Calu3 (cell line): ENCODE measurements at regions of chr21 and their contacts with region 1.

Region 1: DNA sequence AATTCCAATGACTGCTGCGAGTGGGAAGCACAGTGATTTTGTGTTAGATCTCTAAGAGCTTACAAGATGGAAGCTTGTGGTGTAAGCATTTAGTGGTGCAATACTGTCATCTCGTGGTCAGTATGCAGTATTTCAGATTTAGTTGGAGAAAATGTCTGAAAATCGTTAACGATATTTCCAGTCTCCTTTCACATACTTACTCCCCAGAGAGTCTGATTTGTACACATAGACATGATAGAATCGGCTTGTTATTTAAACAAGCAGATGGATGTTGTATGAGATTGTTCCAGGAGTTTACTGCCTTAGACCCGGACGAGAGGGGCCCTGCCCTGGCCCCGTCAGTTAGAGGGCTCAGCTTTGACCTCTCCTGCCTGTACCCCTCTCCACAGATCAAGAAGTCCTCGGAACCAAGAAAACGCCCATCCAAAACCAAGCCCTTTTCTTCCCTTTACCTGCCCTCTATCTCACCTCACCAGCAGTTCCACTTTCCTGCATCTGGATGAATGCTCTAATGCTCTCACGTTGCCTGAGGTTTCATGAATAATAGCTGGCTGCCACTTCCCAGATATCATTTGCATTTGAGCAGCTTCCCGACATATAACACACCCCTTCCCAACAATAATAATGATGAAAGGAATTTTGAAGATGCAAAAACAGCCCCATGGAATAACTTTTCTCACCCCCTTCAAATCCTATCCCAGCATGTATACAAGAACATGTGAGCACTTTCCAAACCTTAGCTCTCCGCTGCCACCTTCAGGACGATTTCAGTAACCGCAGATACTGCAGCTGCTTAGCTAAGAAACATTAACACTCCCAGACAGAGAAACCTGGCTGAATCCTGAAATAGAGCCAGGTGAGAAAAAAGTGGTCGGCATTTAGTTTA is 247.3 kb downstream of the LTN1 start:
- DNase-seq: peak; percentile 68
- H3K4me3 Mint-ChIP-seq: no peak overlapping the region
- H3K27ac Mint-ChIP-seq: no peak overlapping the region
- H3K4me1 Mint-ChIP-seq: no peaks in the 10 kb centered on the region
- H3K27me3 Mint-ChIP-seq: no peaks in the 10 kb centered on the region
- CTCF ChIP-seq: peak; percentile 54

Region 2: GRCh38 chr21:27700974-27701614 is 1044.3 kb before region 1 on chr21:
- CTCF ChIA-PET with region 1: interaction called, 10 read pairs
- intact Hi-C with region 1: loop called (anchors 2 kb)
- DNase-seq: peak; percentile 77
- H3K4me3 Mint-ChIP-seq: no peak overlapping the region
- H3K27ac Mint-ChIP-seq: no peak overlapping the region
- H3K4me1 Mint-ChIP-seq: peaks cover 6% of the 10 kb centered on the region
- H3K27me3 Mint-ChIP-seq: no peaks in the 10 kb centered on the region
- CTCF ChIP-seq: peak; percentile 83

Region 3: DNA sequence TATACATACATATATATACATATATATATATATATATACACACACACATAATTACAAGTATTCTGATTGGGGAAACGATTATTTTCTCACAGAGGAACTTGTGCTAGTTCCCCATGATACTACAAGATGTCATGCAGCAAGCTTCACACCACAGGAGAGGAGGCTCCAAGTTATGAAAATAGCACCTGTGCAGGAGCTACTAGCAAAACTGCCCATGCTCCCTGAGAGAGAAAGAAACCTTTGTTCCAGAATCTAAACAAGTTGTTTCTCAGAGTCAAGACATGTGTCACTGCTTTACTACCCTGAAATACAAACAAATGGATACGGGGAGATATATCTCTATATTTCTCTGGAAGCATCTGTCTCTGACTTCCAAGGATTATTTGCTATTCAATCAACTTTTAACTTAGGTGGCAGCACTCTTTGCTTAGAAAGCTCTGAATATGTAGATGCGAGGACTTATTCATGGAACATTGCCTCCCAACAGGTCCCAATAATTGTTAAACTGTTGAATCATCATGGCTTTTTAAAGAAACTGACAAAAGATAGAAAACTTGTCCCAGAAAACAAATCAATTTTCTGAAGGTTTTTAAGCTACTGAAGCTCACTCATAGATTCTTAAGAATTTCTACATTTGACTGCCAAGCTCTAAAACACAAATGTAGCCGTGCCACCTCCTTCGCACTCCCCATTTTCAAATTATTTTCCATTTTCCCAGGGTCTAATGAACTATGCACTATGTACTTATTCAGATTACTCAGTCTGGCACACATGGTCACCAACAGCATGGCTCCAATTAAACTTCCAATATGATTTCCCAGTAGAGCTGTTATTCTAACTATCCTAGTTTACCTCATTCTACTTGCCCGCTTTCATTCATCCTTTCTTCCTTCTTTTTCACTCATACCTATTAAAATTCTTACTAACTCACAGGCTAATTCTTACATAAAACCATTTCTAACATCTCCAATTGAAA is 681.8 kb before region 1 on chr21:
- CTCF ChIA-PET with region 1: no interaction called
- intact Hi-C with region 1: loop called (anchors 10 kb)
- DNase-seq: no peak
- H3K4me3 Mint-ChIP-seq: no peak overlapping the region
- H3K27ac Mint-ChIP-seq: no peak overlapping the region
- H3K4me1 Mint-ChIP-seq: peaks cover 2% of the 10 kb centered on the region
- H3K27me3 Mint-ChIP-seq: no peaks in the 10 kb centered on the region
- CTCF ChIP-seq: no peak

Region 4: DNA sequence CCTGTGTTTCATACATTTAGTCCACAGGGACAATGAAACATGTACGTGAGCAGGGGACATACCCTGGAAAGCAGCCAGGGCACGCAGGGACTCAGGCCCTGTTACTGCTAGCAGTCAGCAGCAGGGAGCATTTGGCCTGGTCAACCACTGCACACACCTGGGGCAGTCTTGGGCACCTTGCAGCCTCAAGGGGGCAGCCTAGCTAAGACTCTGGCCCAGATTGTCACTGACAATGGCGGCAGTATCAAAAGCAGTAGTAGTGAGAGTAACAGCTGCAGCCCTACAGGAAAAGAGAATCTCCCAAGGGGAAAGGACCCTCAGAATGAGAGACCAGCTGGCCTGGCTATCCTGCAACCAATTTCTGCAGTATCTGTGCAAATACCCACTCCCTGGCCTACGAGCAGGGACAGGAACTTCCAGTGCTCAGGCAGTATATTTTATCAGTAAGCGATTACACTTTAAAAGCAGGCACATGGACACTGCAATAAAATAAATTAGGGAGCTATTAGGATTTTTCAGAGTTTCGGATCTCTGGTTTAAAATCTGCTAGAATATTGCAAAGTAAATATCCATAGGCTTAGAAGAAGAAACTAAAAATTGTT is 228.3 kb before region 1 on chr21:
- CTCF ChIA-PET with region 1: interaction called, 23 read pairs
- intact Hi-C with region 1: loop called (anchors 1 kb)
- DNase-seq: peak; percentile 75
- H3K4me3 Mint-ChIP-seq: no peak overlapping the region
- H3K27ac Mint-ChIP-seq: no peak overlapping the region
- H3K4me1 Mint-ChIP-seq: no peaks in the 10 kb centered on the region
- H3K27me3 Mint-ChIP-seq: no peaks in the 10 kb centered on the region
- CTCF ChIP-seq: peak; percentile 52